Activated B cell treated with CpG ODN at 0.5 μM for 24 hours (primary cell): ENCODE measurements at regions of chr4 and their contacts with region 1.

Region 1: GRCh38 chr4:56544573-56545131 is 39.1 kb downstream of the ARL9 start:
- DNase-seq: peak; percentile 89
- ATAC-seq: peak; percentile 99
- H3K4me3 Mint-ChIP-seq: peak overlapping the region; percentile 71
- H3K27ac Mint-ChIP-seq: no peak overlapping the region
- H3K4me1 Mint-ChIP-seq: peaks cover 10% of the 10 kb centered on the region
- H3K27me3 Mint-ChIP-seq: peaks cover 14% of the 10 kb centered on the region
- CTCF ChIP-seq: peak; percentile 93

Region 2: GRCh38 chr4:56424697-56425514 is 119.7 kb before region 1 on chr4:
- CTCF ChIA-PET with region 1: interaction called, 13 read pairs
- POLR2A ChIA-PET with region 1: no interaction called
- intact Hi-C with region 1: loop called (anchors 1 kb)
- DNase-seq: no peak
- ATAC-seq: no peak
- H3K4me3 Mint-ChIP-seq: no peak overlapping the region
- H3K27ac Mint-ChIP-seq: no peak overlapping the region
- H3K4me1 Mint-ChIP-seq: peaks cover 12% of the 10 kb centered on the region
- H3K27me3 Mint-ChIP-seq: no peaks in the 10 kb centered on the region
- CTCF ChIP-seq: peak; percentile 75

Region 3: DNA sequence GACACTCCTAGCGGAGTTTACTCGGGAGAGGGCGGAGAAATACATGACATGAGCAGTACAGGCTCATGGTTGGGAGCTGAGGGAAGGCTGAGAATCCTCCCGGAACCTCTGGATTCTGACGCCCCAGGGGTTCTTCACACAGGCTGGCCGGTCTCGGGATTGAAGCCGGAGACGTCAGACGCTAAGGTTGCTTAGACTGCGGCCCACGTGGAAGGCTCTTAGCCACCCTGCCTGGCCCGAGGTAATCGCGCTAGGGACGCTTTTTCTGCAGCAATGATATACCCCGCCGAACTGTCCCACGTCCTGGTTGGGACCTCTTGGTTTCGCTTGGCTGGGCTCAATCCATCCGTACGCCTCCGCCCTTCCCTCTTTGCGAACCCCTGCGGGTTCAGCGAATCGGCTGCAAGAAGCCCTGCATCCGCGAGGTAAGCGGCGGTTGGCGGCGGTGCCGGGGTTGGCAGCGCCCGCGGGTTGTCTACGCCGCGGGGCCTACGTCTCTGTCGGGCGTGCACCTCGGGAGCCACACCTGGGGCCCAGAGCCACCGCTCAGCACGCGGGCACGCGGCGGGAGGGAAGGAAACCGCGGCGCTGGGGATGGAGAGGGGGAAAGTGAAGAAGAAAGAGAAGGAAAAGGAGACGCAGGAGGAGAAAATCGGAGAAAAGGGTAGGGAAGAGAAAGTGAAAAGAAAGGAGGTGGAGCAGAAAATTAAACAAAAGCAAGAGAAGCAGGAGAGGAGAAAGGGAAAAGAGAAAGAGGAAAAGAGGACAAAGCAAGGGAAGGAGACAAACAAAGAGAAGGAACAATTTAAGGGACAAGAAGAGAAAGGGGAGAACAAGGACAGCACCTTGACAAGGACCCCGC is 39.2 kb before region 1 on chr4 and contains the start of gene ARL9:
- CTCF ChIA-PET with region 1: no interaction called
- POLR2A ChIA-PET with region 1: no interaction called
- intact Hi-C with region 1: loop called (anchors 1 kb)
- DNase-seq: peak; percentile 52
- ATAC-seq: peak; percentile 86
- H3K4me3 Mint-ChIP-seq: peak within 1 kb of the TSS; percentile 88
- H3K27ac Mint-ChIP-seq: peak within 1 kb of the TSS; percentile 50
- H3K4me1 Mint-ChIP-seq: peaks cover 19% of the 10 kb centered on the region
- H3K27me3 Mint-ChIP-seq: peaks cover 2% of the 10 kb centered on the region
- CTCF ChIP-seq: no peak
- total RNA-seq, gene ARL9: 0.22 TPM in 1 of 2 replicates, not detected in the other

Region 4: GRCh38 chr4:56755901-56756300 is 211.2 kb after region 1 on chr4:
- CTCF ChIA-PET with region 1: no interaction called
- POLR2A ChIA-PET with region 1: no interaction called
- intact Hi-C with region 1: no loop called
- DNase-seq: no peak
- ATAC-seq: no peak
- H3K4me3 Mint-ChIP-seq: no peak overlapping the region
- H3K27ac Mint-ChIP-seq: peak overlapping the region; percentile 41
- H3K4me1 Mint-ChIP-seq: peaks cover 50% of the 10 kb centered on the region
- H3K27me3 Mint-ChIP-seq: no peaks in the 10 kb centered on the region
- CTCF ChIP-seq: no peak